Mucosa of descending colon (tissue), 3 donors: ENCODE measurements at regions of chr10 and their contacts with region 1.

Region 1: GRCh38 chr10:115417585-115418265 is 324.6 kb downstream of the ATRNL1 start:
- DNase-seq: peak in 1 of 3 donors; percentile 18
- ATAC-seq: peak; percentile 57
- H3K4me3 ChIP-seq: no peak overlapping the region
- H3K4me1 ChIP-seq: no peaks in the 10 kb centered on the region
- CTCF ChIP-seq: no peak

Region 2: DNA sequence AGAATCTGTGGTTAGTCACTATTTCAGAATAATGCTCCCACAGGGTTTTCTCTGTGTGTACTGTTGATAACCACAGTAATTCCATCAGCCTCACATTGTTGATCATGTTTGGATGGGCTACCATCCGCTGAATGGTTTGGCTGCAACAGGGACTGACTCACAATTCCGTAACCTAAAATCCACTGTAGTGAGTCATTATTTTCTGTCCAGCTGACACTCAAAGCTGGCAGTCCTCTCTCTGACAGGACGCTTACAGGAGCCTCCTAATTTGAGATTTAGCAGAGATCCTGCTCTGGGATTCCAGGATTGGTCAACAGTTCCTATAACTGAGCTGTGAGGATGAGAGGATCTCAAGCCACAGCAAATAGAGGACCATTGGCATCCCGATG is 1146.0 kb before region 1 on chr10:
- intact Hi-C with region 1: no loop called
- DNase-seq: peak in 1 of 3 donors; percentile 31
- ATAC-seq: peak; percentile 29
- H3K4me3 ChIP-seq: no peak overlapping the region
- H3K4me1 ChIP-seq: peaks cover 11% of the 10 kb centered on the region
- CTCF ChIP-seq: no peak

Region 3: GRCh38 chr10:115167751-115168150 is 250.0 kb before region 1 on chr10:
- intact Hi-C with region 1: loop called in 1 of 2 experiments (anchors 5 kb)
- DNase-seq: no peak
- ATAC-seq: no peak
- H3K4me3 ChIP-seq: no peak overlapping the region
- H3K4me1 ChIP-seq: no peaks in the 10 kb centered on the region
- CTCF ChIP-seq: no peak